Aorta (tissue), 5 donors: ENCODE measurements at regions of chr7 and their contacts with region 1.

Region 1: GRCh38 chr7:156131876-156132275 is 319.6 kb upstream of the SHH start:
- DNase-seq: no peak
- ATAC-seq: no peak
- H3K4me3 ChIP-seq: no peak overlapping the region
- H3K27ac ChIP-seq: no peak overlapping the region
- H3K4me1 ChIP-seq: no peaks in the 10 kb centered on the region
- H3K27me3 ChIP-seq: no peaks in the 10 kb centered on the region

Region 2: DNA sequence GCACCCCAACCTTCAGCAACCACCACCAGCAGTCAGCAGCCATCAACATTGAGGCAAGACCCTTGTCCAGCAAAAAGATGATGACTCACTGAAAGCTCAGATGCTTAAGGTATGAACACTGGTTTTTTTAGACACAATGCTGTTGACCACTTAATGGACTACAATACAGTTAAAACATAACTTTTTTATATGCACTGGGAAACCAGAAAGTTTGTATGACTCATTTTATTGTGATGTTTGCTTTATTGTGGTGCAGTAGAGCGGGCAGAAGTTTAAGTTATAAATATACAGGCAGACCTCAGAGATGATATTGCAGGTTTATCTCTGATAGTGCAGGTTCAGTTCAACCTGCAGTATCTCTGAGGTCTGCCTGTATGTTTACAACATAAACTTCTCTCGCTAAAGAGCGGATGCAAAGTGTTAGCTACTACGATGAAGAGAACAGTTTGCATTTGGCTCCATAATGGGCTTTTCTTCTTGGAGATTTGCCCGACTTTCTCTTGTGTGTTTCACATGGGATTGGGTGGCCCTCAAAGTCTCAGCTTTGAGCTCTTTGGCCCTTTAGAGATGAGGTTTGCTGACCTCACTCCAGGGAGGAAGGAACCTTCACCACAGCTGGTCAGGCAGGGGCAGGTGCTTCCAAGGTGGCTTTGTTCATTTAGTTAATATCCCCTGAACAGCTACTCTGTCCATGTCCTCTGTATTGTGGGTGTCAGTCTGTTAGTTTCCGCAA is 235.2 kb before region 1 on chr7:
- intact Hi-C with region 1: no loop called
- DNase-seq: peak in 1 of 2 donors; percentile 16
- ATAC-seq: no peak
- H3K4me3 ChIP-seq: no peak overlapping the region
- H3K27ac ChIP-seq: no peak overlapping the region
- H3K4me1 ChIP-seq: no peaks in the 10 kb centered on the region
- H3K27me3 ChIP-seq: no peaks in the 10 kb centered on the region

Region 3: GRCh38 chr7:156074982-156075615 is 56.8 kb before region 1 on chr7:
- intact Hi-C with region 1: loop called in 1 of 2 experiments (anchors 2 kb)
- DNase-seq: no peak
- ATAC-seq: no peak
- H3K4me3 ChIP-seq: no peak overlapping the region
- H3K27ac ChIP-seq: no peak overlapping the region
- H3K4me1 ChIP-seq: no peaks in the 10 kb centered on the region
- H3K27me3 ChIP-seq: no peaks in the 10 kb centered on the region

Region 4: GRCh38 chr7:156460858-156461627 is 329.2 kb after region 1 on chr7:
- intact Hi-C with region 1: no loop called
- DNase-seq: no peak
- ATAC-seq: no peak
- H3K4me3 ChIP-seq: no peak overlapping the region
- H3K27ac ChIP-seq: no peak overlapping the region
- H3K4me1 ChIP-seq: no peaks in the 10 kb centered on the region
- H3K27me3 ChIP-seq: no peaks in the 10 kb centered on the region